CD4-positive, alpha-beta memory T cell (primary cell): ENCODE measurements at regions of chr7 and their contacts with region 1.

Region 1: GRCh38 chr7:47991741-47992311 is 12.4 kb upstream of the HUS1 start:
- DNase-seq: peak; percentile 81 to 87 (median 83)
- H3K4me3 ChIP-seq: peak overlapping the region; percentile 42 to 80
- H3K4me3 Mint-ChIP-seq: peak overlapping the region; percentile 87 to 97 (median 93)
- H3K27ac ChIP-seq: peak overlapping the region; percentile 55
- H3K27ac Mint-ChIP-seq: peak overlapping the region; percentile 90 to 98 (median 93)
- H3K4me1 ChIP-seq: peaks cover 15% of the 10 kb centered on the region
- H3K4me1 Mint-ChIP-seq: peaks cover 16 to 20% (median 17%) of the 10 kb centered on the region in 4 donors
- H3K27me3 ChIP-seq: no peaks in the 10 kb centered on the region
- H3K27me3 Mint-ChIP-seq: no peaks in the 10 kb centered on the region

Region 2: GRCh38 chr7:46444266-46444665 is 1547.6 kb before region 1 on chr7:
- CTCF ChIA-PET with region 1: no interaction called
- POLR2A ChIA-PET with region 1: no interaction called
- intact Hi-C with region 1: no loop called
- DNase-seq: no peak
- H3K4me3 ChIP-seq: no peak overlapping the region
- H3K4me3 Mint-ChIP-seq: no peak overlapping the region
- H3K27ac ChIP-seq: no peak overlapping the region
- H3K27ac Mint-ChIP-seq: no peak overlapping the region
- H3K4me1 ChIP-seq: no peaks in the 10 kb centered on the region
- H3K4me1 Mint-ChIP-seq: no peaks in the 10 kb centered on the region
- H3K27me3 ChIP-seq: no peaks in the 10 kb centered on the region
- H3K27me3 Mint-ChIP-seq: peaks cover 0 to 1% of the 10 kb centered on the region in 2 donors

Region 3: GRCh38 chr7:47945261-47946001 is 46.4 kb before region 1 on chr7:
- CTCF ChIA-PET with region 1: interaction called, 12 read pairs
- POLR2A ChIA-PET with region 1: no interaction called
- intact Hi-C with region 1: loop called (anchors 1 kb)
- DNase-seq: peak; percentile 53 to 62 (median 61)
- H3K4me3 ChIP-seq: no peak overlapping the region
- H3K4me3 Mint-ChIP-seq: no peak overlapping the region
- H3K27ac ChIP-seq: no peak overlapping the region
- H3K27ac Mint-ChIP-seq: no peak overlapping the region
- H3K4me1 ChIP-seq: no peaks in the 10 kb centered on the region
- H3K4me1 Mint-ChIP-seq: peaks cover 0 to 3% (median 0%) of the 10 kb centered on the region in 4 donors
- H3K27me3 ChIP-seq: no peaks in the 10 kb centered on the region
- H3K27me3 Mint-ChIP-seq: no peaks in the 10 kb centered on the region

Region 4: DNA sequence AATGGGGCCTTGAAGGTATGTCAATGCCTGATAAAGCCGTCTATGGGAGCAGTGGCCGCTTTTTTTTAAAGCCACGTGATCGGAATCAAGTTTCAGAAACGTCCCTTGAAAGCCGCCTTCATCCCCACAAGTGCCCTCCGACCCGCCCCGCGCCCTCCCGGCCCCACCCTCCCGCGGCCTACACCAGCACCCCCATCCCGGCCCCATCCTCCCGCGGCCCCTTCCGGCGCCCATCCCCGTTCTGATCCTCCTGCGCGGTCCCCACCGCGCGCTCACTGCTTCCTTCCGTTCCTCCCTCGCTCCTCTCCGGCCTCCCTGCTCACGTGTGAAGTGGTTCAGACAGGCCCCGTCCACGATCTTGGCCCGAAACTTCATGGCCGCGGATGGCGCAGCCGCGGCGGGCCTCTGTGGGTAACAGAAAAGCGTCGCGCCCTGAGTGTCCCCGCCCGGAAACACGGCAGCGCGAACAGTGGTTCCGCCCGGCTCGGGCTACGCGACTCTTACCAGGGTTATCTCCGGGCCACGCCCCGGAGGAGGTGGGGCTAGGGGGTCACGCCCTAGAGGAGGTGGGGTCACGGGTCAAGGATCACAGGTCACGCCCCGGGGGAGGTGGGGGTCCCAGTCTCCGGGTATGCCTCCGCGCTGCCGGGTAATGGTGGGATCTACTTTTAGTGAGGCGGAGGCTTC is 12.5 kb before region 1 on chr7 and contains the start of gene HUS1:
- CTCF ChIA-PET with region 1: interaction called, 14 read pairs
- POLR2A ChIA-PET with region 1: interaction called, 9 read pairs
- intact Hi-C with region 1: loop called (anchors 1 kb)
- DNase-seq: peak; percentile 89 to 94 (median 90)
- H3K4me3 ChIP-seq: peak within 1 kb of the TSS; percentile 72 to 81
- H3K4me3 Mint-ChIP-seq: peak within 1 kb of the TSS; percentile 92 to 99 (median 95)
- H3K27ac ChIP-seq: peak within 1 kb of the TSS; percentile 83
- H3K27ac Mint-ChIP-seq: peak within 1 kb of the TSS; percentile 97 to 100 (median 98)
- H3K4me1 ChIP-seq: peaks cover 23% of the 10 kb centered on the region
- H3K4me1 Mint-ChIP-seq: peaks cover 14 to 32% (median 24%) of the 10 kb centered on the region in 4 donors
- H3K27me3 ChIP-seq: no peaks in the 10 kb centered on the region
- H3K27me3 Mint-ChIP-seq: no peaks in the 10 kb centered on the region
- total RNA-seq, gene HUS1: 72.5 to 74.1 TPM

Region 5: DNA sequence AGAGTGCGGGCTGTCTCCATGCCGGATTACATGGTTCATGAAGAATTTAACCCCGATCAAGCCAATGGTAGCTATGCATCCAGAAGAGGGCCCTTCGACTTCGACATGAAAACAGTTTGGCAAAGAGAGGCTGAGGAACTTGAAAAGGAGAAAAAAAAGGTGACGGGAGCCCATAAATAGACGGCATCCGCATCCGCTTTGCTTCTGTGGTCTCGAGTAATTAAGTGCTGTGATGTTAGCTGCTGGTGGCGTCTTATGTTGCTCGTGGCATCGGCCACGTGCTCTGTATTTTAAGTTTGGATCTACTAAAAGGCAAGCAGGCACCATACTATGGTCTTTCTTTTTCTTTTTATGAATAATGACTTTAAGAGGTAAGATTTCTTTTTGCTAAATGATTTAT is 54.6 kb after region 1 on chr7:
- CTCF ChIA-PET with region 1: interaction called, 13 read pairs
- POLR2A ChIA-PET with region 1: interaction called, 4 read pairs
- intact Hi-C with region 1: no loop called
- DNase-seq: peak; percentile 32 to 55 (median 39)
- H3K4me3 ChIP-seq: no peak overlapping the region
- H3K4me3 Mint-ChIP-seq: peak overlapping the region in 5 of 8 donors; percentile 23 to 47 (median 41)
- H3K27ac ChIP-seq: no peak overlapping the region
- H3K27ac Mint-ChIP-seq: peak overlapping the region; percentile 1 to 80 (median 62)
- H3K4me1 ChIP-seq: peaks cover 27% of the 10 kb centered on the region
- H3K4me1 Mint-ChIP-seq: peaks cover 21 to 38% (median 31%) of the 10 kb centered on the region in 4 donors
- H3K27me3 ChIP-seq: no peaks in the 10 kb centered on the region
- H3K27me3 Mint-ChIP-seq: no peaks in the 10 kb centered on the region

Region 6: GRCh38 chr7:48094751-48095562 is 103.1 kb after region 1 on chr7:
- CTCF ChIA-PET with region 1: interaction called, 218 read pairs
- POLR2A ChIA-PET with region 1: interaction called, 62 read pairs
- intact Hi-C with region 1: no loop called
- DNase-seq: no peak
- H3K4me3 ChIP-seq: no peak overlapping the region
- H3K4me3 Mint-ChIP-seq: peak overlapping the region in 7 of 8 donors; percentile 25 to 54 (median 30)
- H3K27ac ChIP-seq: no peak overlapping the region
- H3K27ac Mint-ChIP-seq: peak overlapping the region; percentile 33 to 92 (median 74)
- H3K4me1 ChIP-seq: peaks cover 100% of the 10 kb centered on the region
- H3K4me1 Mint-ChIP-seq: peaks cover 63 to 98% (median 84%) of the 10 kb centered on the region in 4 donors
- H3K27me3 ChIP-seq: no peaks in the 10 kb centered on the region
- H3K27me3 Mint-ChIP-seq: no peaks in the 10 kb centered on the region

Region 7: GRCh38 chr7:48109848-48110663 is 118.2 kb after region 1 on chr7:
- CTCF ChIA-PET with region 1: interaction called, 218 read pairs
- POLR2A ChIA-PET with region 1: interaction called, 66 read pairs
- intact Hi-C with region 1: loop called (anchors 1 kb)
- DNase-seq: peak; percentile 81 to 86 (median 84)
- H3K4me3 ChIP-seq: no peak overlapping the region
- H3K4me3 Mint-ChIP-seq: peak overlapping the region in 2 of 8 donors; percentile 2 to 13
- H3K27ac ChIP-seq: no peak overlapping the region
- H3K27ac Mint-ChIP-seq: peak overlapping the region; percentile 57 to 90 (median 85)
- H3K4me1 ChIP-seq: peaks cover 13% of the 10 kb centered on the region
- H3K4me1 Mint-ChIP-seq: peaks cover 8 to 16% (median 11%) of the 10 kb centered on the region in 4 donors
- H3K27me3 ChIP-seq: no peaks in the 10 kb centered on the region
- H3K27me3 Mint-ChIP-seq: no peaks in the 10 kb centered on the region

Region 8: DNA sequence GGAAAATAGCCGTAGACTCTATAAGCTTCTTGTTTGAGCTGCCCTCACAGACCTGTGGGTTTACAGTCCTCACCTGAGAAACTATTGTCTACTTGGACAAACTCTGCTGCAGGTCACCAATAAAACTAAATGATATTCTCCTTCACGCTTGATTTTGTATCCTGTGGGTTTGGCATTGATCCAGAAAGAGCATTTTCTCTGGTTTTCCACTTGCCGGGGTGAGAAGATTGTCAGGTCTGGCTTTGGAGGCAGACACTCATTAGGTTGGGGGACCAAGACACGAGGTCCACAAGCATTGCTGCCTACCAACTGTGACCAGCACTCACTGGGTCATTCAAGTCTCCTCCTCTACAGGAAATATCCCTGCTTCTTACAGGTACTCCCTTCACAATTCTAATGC is 1001.0 kb after region 1 on chr7:
- CTCF ChIA-PET with region 1: no interaction called
- POLR2A ChIA-PET with region 1: no interaction called
- intact Hi-C with region 1: no loop called
- DNase-seq: no peak
- H3K4me3 ChIP-seq: no peak overlapping the region
- H3K4me3 Mint-ChIP-seq: no peak overlapping the region
- H3K27ac ChIP-seq: no peak overlapping the region
- H3K27ac Mint-ChIP-seq: no peak overlapping the region
- H3K4me1 ChIP-seq: no peaks in the 10 kb centered on the region
- H3K4me1 Mint-ChIP-seq: no peaks in the 10 kb centered on the region
- H3K27me3 ChIP-seq: no peaks in the 10 kb centered on the region
- H3K27me3 Mint-ChIP-seq: no peaks in the 10 kb centered on the region